ENCODE measurements at regions of chr9 and their contacts with region 1.

Region 1: GRCh38 chr9:36166101-36166927 is 2.9 kb upstream of the CCIN start:
- DNase-seq: peak; percentile 25 to 96
- H3K4me3 ChIP-seq: peak overlapping the region; percentile 29 to 62 (median 39)
- H3K27ac ChIP-seq: no peak overlapping the region
- H3K4me1 ChIP-seq: peaks cover 11 to 25% (median 17%) of the 10 kb centered on the region in 4 experiments
- H3K27me3 ChIP-seq: no peaks in the 10 kb centered on the region
- CTCF ChIP-seq: peak; percentile 68 to 91 (median 84)
- EP300 ChIP-seq: no peak; a peak in 1 of 3 replicates
- POLR2A ChIP-seq: no peak
- RAD21 ChIP-seq: peak; percentile 85

Region 2: GRCh38 chr9:36110434-36110833 is 55.9 kb before region 1 on chr9:
- CTCF ChIA-PET with region 1: interaction called, 153 read pairs
- POLR2A ChIA-PET with region 1: interaction called, 5 read pairs
- DNase-seq: no peak
- H3K4me3 ChIP-seq: no peak overlapping the region
- H3K27ac ChIP-seq: no peak overlapping the region
- H3K4me1 ChIP-seq: no peaks in the 10 kb centered on the region
- H3K27me3 ChIP-seq: no peaks in the 10 kb centered on the region
- CTCF ChIP-seq: peak in 2 of 3 experiments; percentile 19 to 23; a peak in 2 of 4 replicates
- EP300 ChIP-seq: no peak
- POLR2A ChIP-seq: no peak
- RAD21 ChIP-seq: peak; percentile 32 to 49

Region 3: GRCh38 chr9:36116593-36116992 is 49.7 kb before region 1 on chr9:
- CTCF ChIA-PET with region 1: interaction called, 29 read pairs
- POLR2A ChIA-PET with region 1: interaction called, 5 read pairs
- DNase-seq: no peak
- H3K4me3 ChIP-seq: no peak overlapping the region
- H3K27ac ChIP-seq: no peak overlapping the region
- H3K4me1 ChIP-seq: no peaks in the 10 kb centered on the region
- H3K27me3 ChIP-seq: no peaks in the 10 kb centered on the region
- CTCF ChIP-seq: no peak
- EP300 ChIP-seq: no peak
- POLR2A ChIP-seq: no peak
- RAD21 ChIP-seq: no peak

Region 4: GRCh38 chr9:36136272-36136893 is 29.9 kb before region 1 on chr9 and contains the start of gene GLIPR2:
- CTCF ChIA-PET with region 1: interaction called, 58 read pairs
- POLR2A ChIA-PET with region 1: interaction called, 19 read pairs
- DNase-seq: no peak
- H3K4me3 ChIP-seq: peak within 1 kb of the TSS; percentile 62 to 76 (median 70)
- H3K27ac ChIP-seq: no peak within 1 kb of the TSS
- H3K4me1 ChIP-seq: peaks cover 0 to 15% (median 7%) of the 10 kb centered on the region in 4 experiments; a peak in 6 of 7 replicates
- H3K27me3 ChIP-seq: peaks cover 18 to 58% (median 49%) of the 10 kb centered on the region in 4 experiments
- CTCF ChIP-seq: peak in 2 of 3 experiments; percentile 15 to 25; a peak in 2 of 4 replicates
- EP300 ChIP-seq: no peak
- POLR2A ChIP-seq: peak in 1 of 2 experiments; percentile 67; a peak in 2 of 3 replicates
- RAD21 ChIP-seq: peak in 1 of 2 experiments; percentile 18; a peak in 1 of 4 replicates
- total RNA-seq, gene GLIPR2: 7.9 and 8.9 TPM in 2 replicates

Region 5: DNA sequence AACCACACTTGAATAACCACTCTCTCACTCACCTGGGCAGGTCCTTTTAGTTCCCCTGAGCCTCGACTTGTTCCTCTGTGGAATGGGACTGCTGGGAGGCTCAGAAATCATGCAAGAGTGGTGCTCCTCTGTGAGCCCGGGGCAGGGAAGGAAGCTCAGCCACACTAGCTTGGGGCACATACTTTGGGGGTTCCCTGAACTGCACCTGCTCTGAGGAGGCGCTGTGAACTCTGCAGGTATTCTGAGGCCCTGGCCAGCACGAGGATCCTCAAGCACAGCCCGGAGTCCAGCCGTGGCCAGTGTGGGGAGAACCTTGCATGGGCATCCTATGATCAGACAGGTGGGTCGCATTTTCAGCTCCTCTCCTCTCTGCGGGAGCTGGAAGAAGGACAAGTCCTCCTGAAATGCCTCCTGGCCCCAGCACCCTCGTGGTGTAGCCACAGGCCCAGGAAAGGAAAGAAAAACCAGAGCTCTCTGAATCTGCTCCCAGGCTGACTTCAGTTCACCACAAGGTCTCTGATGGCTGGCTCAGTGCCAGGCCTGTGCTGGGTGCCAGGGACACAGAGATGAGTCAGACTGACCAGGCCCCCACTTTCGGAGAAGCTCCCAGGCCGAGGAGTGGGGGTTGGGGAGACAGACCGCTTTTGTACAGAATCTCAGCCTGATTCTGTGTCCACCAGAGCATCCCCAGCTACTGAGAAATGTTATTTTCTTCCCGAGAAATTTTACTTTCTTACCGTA is 17.8 kb before region 1 on chr9:
- CTCF ChIA-PET with region 1: interaction called, 58 read pairs
- POLR2A ChIA-PET with region 1: interaction called, 19 read pairs
- DNase-seq: no peak
- H3K4me3 ChIP-seq: no peak overlapping the region
- H3K27ac ChIP-seq: no peak overlapping the region
- H3K4me1 ChIP-seq: peaks cover 0 to 4% (median 0%) of the 10 kb centered on the region in 4 experiments; a peak in 1 of 7 replicates
- H3K27me3 ChIP-seq: no peaks in the 10 kb centered on the region
- CTCF ChIP-seq: no peak
- EP300 ChIP-seq: no peak
- POLR2A ChIP-seq: no peak
- RAD21 ChIP-seq: no peak

Region 6: DNA sequence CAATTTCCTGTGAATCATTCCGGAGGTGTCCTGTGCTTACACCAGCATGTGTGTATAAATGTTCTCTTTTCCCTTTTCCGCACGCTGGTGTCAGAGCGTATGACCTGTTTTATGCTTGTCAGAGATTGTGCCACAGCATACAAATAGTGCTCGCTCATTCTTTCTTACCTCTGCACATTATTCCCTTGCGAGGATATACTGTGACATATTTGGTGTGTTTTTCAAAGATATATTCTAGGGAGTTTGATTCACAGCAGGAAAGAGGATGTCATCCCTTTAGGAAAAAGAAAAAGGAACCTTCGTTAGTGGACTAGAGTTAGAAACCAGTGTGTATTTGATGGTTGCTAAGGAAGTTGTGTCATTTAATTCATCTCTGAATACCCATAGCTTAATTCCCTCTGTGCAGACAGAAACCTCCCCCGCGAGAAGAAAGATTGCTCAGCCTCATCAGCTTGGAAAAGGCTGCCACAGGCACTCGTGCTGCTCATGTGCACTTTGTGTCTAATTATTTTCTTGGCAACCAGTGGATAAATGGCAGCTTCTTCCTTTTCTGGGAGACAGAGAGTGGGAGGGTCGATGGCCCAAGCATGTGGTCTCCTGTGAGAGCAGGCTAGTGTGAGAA is 11.9 kb before region 1 on chr9:
- CTCF ChIA-PET with region 1: interaction called, 48 read pairs
- POLR2A ChIA-PET with region 1: interaction called, 18 read pairs
- DNase-seq: no peak
- H3K4me3 ChIP-seq: no peak overlapping the region
- H3K27ac ChIP-seq: no peak overlapping the region
- H3K4me1 ChIP-seq: no peaks in the 10 kb centered on the region
- H3K27me3 ChIP-seq: no peaks in the 10 kb centered on the region
- CTCF ChIP-seq: no peak
- EP300 ChIP-seq: no peak
- POLR2A ChIP-seq: no peak
- RAD21 ChIP-seq: no peak

Region 7: GRCh38 chr9:36190388-36191287 is 24.3 kb after region 1 on chr9 and contains the start of gene CLTA:
- CTCF ChIA-PET with region 1: interaction called, 38 read pairs
- POLR2A ChIA-PET with region 1: interaction called, 25 read pairs
- DNase-seq: peak; percentile 92 to 93
- H3K4me3 ChIP-seq: peak within 1 kb of the TSS; percentile 86 to 98 (median 97)
- H3K27ac ChIP-seq: peak within 1 kb of the TSS; percentile 89
- H3K4me1 ChIP-seq: peaks cover 6 to 12% (median 10%) of the 10 kb centered on the region in 4 experiments; a peak in 6 of 7 replicates
- H3K27me3 ChIP-seq: no peaks in the 10 kb centered on the region
- CTCF ChIP-seq: peak in 1 of 3 experiments; percentile 35; a peak in 1 of 4 replicates
- EP300 ChIP-seq: no peak
- POLR2A ChIP-seq: peak; percentile 92 to 97
- RAD21 ChIP-seq: no peak
- total RNA-seq, gene CLTA: 236 and 239 TPM in 2 replicates

Region 8: GRCh38 chr9:36222449-36222848 is 56.1 kb after region 1 on chr9:
- CTCF ChIA-PET with region 1: no interaction called
- POLR2A ChIA-PET with region 1: no interaction called
- DNase-seq: no peak
- H3K4me3 ChIP-seq: no peak overlapping the region
- H3K27ac ChIP-seq: no peak overlapping the region
- H3K4me1 ChIP-seq: no peaks in the 10 kb centered on the region
- H3K27me3 ChIP-seq: no peaks in the 10 kb centered on the region
- CTCF ChIP-seq: no peak
- EP300 ChIP-seq: no peak
- POLR2A ChIP-seq: no peak
- RAD21 ChIP-seq: no peak

Region 9: GRCh38 chr9:36237230-36237629 is 70.9 kb after region 1 on chr9:
- CTCF ChIA-PET with region 1: no interaction called
- POLR2A ChIA-PET with region 1: no interaction called
- DNase-seq: no peak
- H3K4me3 ChIP-seq: no peak overlapping the region
- H3K27ac ChIP-seq: no peak overlapping the region
- H3K4me1 ChIP-seq: no peaks in the 10 kb centered on the region
- H3K27me3 ChIP-seq: no peaks in the 10 kb centered on the region
- CTCF ChIP-seq: no peak
- EP300 ChIP-seq: no peak
- POLR2A ChIP-seq: no peak
- RAD21 ChIP-seq: no peak

Measured in H1 (cell line).